Gastrocnemius medialis (tissue), 4 donors: ENCODE measurements at regions of chr11 and their contacts with region 1.

Region 1: GRCh38 chr11:94800414-94800813 is 32.3 kb downstream of the AMOTL1 start:
- DNase-seq: no peak
- ATAC-seq: no peak
- H3K4me3 ChIP-seq: no peak overlapping the region
- H3K27ac ChIP-seq: peak overlapping the region; percentile 68 to 91 (median 82)
- H3K4me1 ChIP-seq: peaks cover 98 to 100% of the 10 kb centered on the region in 2 donors
- H3K27me3 ChIP-seq: no peaks in the 10 kb centered on the region
- CTCF ChIP-seq: no peak
- POLR2A ChIP-seq: no peak

Region 2: DNA sequence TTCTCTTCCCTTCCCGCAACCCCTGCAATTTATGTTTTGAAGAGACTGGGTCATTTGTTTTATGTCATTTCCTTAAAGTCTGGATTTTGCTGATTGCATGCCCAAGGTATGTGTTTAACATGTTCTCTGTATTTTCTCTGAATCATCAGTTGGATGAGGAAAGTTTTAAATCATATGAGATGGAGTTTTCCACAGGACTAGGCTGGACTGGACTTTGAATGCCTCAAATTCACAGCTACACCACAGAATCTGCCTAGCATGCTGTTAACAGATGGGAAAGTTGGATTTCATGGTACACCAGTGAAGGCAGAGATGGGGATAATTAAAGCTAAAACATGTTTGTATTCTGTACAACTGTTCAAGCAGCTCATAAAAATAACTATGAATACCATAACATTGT is 110.4 kb after region 1 on chr11:
- in situ Hi-C with region 1: loop called in 1 of 4 experiments (anchors 25 kb)
- intact Hi-C with region 1: no loop called
- DNase-seq: no peak
- ATAC-seq: no peak
- H3K4me3 ChIP-seq: no peak overlapping the region
- H3K27ac ChIP-seq: no peak overlapping the region
- H3K4me1 ChIP-seq: no peaks in the 10 kb centered on the region
- H3K27me3 ChIP-seq: no peaks in the 10 kb centered on the region
- CTCF ChIP-seq: no peak
- POLR2A ChIP-seq: no peak